ENCODE measurements at regions of chr6 and their contacts with region 1.

Region 1: GRCh38 chr6:137975188-137975940 is 108.3 kb downstream of the TNFAIP3 start:
- DNase-seq: peak; percentile 64
- H3K4me3 Mint-ChIP-seq: peak overlapping the region; percentile 73
- H3K27ac Mint-ChIP-seq: peak overlapping the region; percentile 91
- H3K4me1 Mint-ChIP-seq: peaks cover 72% of the 10 kb centered on the region
- H3K27me3 Mint-ChIP-seq: no peaks in the 10 kb centered on the region

Region 2: GRCh38 chr6:137155830-137156229 is 819.5 kb before region 1 on chr6:
- CTCF ChIA-PET with region 1: no interaction called
- intact Hi-C with region 1: loop called (anchors 5 kb)
- DNase-seq: peak; percentile 68
- H3K4me3 Mint-ChIP-seq: no peak overlapping the region
- H3K27ac Mint-ChIP-seq: peak overlapping the region; percentile 60
- H3K4me1 Mint-ChIP-seq: peaks cover 16% of the 10 kb centered on the region
- H3K27me3 Mint-ChIP-seq: peaks cover 13% of the 10 kb centered on the region

Region 3: GRCh38 chr6:137707590-137708360 is 267.6 kb before region 1 on chr6:
- CTCF ChIA-PET with region 1: interaction called, 15 read pairs
- intact Hi-C with region 1: loop called (anchors 1 kb)
- DNase-seq: peak; percentile 89
- H3K4me3 Mint-ChIP-seq: peak overlapping the region; percentile 58
- H3K27ac Mint-ChIP-seq: peak overlapping the region; percentile 86
- H3K4me1 Mint-ChIP-seq: peaks cover 58% of the 10 kb centered on the region
- H3K27me3 Mint-ChIP-seq: no peaks in the 10 kb centered on the region

Region 4: DNA sequence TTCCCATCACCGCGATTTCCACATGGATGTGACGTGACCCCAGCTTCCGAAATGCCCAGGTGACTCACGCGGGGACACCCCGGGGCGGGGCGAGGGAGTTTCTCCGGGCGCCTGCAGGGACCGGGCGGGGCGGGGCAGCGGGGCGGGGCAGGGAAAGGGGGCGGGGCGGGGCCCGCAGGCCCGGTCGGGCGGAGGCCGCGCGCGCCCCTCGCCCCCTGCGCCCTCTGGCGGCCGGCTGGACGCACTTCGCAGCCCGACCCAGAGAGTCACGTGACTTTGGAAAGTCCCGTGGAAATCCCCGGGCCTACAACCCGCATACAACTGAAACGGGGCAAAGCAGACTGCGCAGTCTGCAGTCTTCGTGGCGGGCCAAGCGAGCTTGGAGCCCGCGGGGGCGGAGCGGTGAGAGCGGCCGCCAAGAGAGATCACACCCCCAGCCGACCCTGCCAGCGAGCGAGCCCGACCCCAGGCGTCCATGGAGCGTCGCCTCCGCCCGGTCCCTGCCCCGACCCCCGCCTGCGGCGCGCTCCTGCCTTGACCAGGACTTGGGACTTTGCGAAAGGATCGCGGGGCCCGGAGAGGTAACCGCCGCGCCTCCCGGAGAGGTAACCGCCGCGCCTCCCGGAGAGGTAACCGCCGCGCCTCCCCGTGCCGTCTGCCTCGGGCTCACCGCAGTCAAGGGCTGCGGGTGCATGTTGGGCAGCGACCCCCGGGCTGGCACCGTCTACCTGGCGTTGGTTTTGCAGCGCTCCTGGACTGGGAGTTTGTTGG is 108.3 kb before region 1 on chr6 and contains the start of gene TNFAIP3:
- CTCF ChIA-PET with region 1: interaction called, 71 read pairs
- intact Hi-C with region 1: loop called (anchors 1 kb)
- DNase-seq: peak; percentile 97
- H3K4me3 Mint-ChIP-seq: peak within 1 kb of the TSS; percentile 89
- H3K27ac Mint-ChIP-seq: peak within 1 kb of the TSS; percentile 99
- H3K4me1 Mint-ChIP-seq: peaks cover 32% of the 10 kb centered on the region
- H3K27me3 Mint-ChIP-seq: no peaks in the 10 kb centered on the region
- total RNA-seq, gene TNFAIP3: 289 to 294 TPM

Region 5: DNA sequence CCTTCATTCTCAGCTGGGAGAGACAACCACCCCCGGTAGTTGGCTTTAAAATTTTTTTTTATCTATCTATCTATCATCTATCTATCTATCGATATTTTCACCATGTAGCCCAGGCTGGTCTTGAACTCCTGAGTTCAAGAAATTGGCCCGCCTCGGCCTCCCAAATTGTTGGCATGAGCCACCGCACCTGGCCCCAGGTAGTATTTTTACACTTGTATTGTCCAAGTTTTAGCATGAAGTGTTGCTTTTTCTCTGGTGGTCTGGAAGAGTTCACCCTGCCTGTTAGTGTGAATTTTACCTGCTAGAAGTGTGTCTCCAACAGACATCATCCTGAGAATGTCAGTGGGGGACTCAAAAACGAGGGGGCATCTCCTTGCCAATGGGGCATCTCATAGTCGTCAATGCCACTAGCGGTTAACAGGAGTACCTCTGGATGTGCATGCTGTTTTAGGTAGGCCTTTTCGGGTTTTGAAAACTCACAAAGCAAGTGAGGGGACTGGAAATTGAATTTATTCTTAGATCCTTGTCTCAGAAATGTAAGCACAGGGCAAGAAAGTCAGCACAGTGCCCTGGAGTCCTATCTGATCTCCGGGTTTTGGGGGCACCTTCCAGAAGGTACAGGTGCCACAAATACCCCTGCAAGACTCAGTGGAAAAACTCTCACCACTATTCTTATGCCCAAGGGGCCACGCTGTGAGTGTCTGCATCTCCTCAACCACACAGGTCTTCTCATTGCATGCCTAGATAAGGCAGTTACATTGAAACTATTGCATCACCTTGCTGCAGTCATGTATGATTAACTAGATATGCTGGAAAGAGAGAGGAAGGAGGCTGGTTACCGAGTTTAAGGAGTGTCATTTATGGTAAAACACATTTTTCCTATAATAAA is 71.2 kb before region 1 on chr6:
- CTCF ChIA-PET with region 1: interaction called, 3 read pairs
- intact Hi-C with region 1: loop called (anchors 1 kb)
- DNase-seq: peak; percentile 77
- H3K4me3 Mint-ChIP-seq: peak overlapping the region; percentile 71
- H3K27ac Mint-ChIP-seq: peak overlapping the region; percentile 100
- H3K4me1 Mint-ChIP-seq: peaks cover 71% of the 10 kb centered on the region
- H3K27me3 Mint-ChIP-seq: no peaks in the 10 kb centered on the region

Region 6: GRCh38 chr6:137944793-137945498 is 30.4 kb before region 1 on chr6:
- CTCF ChIA-PET with region 1: interaction called, 17 read pairs
- intact Hi-C with region 1: loop called (anchors 1 kb)
- DNase-seq: peak; percentile 46
- H3K4me3 Mint-ChIP-seq: no peak overlapping the region
- H3K27ac Mint-ChIP-seq: peak overlapping the region; percentile 0
- H3K4me1 Mint-ChIP-seq: peaks cover 56% of the 10 kb centered on the region
- H3K27me3 Mint-ChIP-seq: no peaks in the 10 kb centered on the region

Region 7: DNA sequence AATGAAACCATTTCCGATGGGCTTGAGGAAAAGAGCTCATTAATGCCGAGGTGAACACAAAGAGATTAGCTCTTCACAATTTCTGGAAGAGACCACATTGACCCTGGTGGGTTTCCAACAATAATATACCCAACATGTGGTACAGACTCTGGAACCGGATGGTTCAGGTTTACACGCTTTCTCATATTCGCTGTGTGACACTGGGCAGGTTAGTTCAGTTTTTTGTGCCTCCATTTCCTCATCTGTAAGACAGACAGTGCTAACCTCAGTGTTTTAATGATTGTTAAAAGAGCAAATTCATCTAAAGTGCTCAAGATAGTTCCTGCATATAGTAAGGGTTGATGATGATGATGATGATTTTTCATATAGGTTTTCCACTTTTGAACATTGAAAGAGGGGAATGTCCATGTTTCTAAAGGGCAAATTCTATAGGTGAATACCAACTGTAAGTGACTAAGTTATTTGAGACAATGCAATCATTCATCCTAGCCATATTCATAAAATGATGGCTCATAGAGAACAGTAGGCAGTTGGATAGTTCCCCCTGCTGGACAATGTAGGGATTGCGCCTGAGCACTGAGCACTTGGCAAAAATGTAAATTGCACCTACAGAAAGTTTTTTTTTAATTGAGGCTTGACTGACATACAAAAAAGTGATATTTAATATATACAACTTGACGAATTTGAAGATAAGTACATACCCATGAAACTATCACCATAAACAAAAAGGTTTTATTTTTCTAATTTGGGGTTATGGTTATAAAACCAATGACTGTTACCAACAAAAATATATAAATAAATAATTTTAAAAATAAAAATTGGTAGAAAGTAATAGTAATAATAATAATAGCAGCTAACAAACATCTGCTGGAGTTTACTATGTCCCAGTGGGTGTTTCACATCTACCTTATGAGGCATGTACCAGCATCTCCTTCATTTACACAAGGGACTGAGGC is 134.0 kb after region 1 on chr6:
- CTCF ChIA-PET with region 1: interaction called, 4 read pairs
- intact Hi-C with region 1: loop called (anchors 1 kb)
- DNase-seq: peak; percentile 93
- H3K4me3 Mint-ChIP-seq: no peak overlapping the region
- H3K27ac Mint-ChIP-seq: no peak overlapping the region
- H3K4me1 Mint-ChIP-seq: peaks cover 19% of the 10 kb centered on the region
- H3K27me3 Mint-ChIP-seq: peaks cover 30% of the 10 kb centered on the region